ENCODE measurements at regions of chr3 and their contacts with region 1.

Region 1: DNA sequence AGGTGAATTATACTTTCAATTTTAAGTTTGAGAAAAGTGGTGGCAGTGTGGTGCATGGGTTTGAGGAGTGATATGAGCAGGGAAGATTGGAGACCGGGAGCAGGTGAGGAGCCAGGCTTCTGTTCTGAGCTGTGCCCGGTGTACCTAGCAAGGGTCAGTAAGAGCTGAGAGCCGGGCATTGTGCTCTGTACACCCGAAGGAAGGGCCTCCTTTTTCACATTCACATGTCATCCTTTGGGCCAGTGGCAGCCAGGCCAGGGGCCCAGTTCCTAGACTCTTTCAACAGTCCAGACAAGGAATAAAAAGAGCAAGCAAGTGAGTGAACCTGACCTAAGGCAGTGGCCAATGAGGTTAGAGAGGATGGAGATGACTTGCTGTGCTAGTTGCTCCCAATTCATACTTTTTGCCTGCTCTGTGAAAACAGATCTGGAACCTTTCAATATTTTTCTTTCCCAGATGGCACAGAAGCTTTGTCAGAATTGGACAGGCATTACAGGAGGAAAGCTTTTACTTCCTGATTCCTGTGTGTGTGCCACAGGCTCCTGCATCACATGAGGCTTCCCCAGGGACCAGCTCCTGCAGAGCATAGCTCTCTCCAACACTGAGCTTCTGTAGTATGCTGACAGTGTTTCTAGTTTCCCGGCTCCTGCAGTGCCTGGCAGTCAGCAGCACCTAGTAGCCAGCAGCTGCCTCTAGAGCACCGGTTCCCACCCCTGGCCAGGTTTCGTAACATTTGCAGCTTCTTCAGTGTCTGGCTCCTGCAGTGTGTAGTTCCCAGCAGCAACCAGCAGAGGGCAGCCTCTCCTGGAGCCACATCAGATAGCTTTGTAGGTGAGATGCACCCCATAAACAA is 5.3 kb upstream of the TRA2B start:
- DNase-seq: peak; percentile 91
- ATAC-seq: peak; percentile 95
- H3K4me3 Mint-ChIP-seq: no peak overlapping the region
- H3K27ac Mint-ChIP-seq: no peak overlapping the region
- H3K4me1 Mint-ChIP-seq: peaks cover 24% of the 10 kb centered on the region
- H3K27me3 Mint-ChIP-seq: peaks cover 19% of the 10 kb centered on the region

Region 2: DNA sequence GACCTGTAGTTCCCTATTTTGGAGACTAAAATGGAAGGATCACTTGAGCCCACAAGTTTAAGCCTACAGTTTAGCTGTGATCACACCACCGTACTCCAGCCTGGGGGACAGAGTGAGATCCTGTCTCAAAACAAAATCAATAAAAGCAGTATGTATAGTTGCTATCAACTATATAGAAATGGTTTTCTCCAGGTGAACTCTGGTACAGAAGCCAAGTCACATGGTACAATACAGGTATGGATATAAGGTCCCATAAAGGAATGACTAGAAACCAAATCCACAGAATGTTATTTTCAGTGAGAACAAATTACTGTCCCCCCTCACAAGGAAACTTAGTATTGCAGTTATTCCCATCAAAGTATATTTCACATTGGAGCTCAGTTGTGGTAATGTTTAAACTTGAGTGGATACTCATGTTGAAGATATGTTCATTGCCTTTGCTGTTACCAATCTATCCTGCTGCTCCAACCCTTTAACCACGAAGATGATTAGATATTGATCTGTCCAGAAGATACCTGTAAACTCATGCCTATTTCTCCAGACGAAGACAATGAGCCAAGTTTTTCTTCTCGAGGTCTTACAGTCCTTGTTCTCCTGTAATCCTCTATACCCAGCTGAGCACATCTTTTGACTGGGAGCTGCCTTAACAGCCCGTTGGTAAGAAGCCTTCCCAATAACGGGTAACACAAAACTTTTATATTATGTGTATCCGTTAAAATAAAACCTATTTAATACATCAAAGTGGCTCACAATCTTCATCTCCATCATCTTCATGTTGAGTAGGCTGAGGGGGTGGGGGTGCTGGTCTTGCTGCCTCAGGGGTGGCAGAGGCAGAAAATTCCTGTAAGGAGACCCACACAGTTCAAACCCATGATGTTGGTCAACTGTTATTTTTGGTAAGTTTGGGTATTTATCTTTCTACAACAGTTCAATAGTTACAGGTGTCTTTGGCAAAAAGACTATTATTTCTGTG is 29.9 kb before region 1 on chr3:
- CTCF ChIA-PET with region 1: interaction called, 13 read pairs
- DNase-seq: no peak
- ATAC-seq: peak; percentile 9
- H3K4me3 Mint-ChIP-seq: no peak overlapping the region
- H3K27ac Mint-ChIP-seq: no peak overlapping the region
- H3K4me1 Mint-ChIP-seq: peaks cover 2% of the 10 kb centered on the region
- H3K27me3 Mint-ChIP-seq: no peaks in the 10 kb centered on the region

Region 3: DNA sequence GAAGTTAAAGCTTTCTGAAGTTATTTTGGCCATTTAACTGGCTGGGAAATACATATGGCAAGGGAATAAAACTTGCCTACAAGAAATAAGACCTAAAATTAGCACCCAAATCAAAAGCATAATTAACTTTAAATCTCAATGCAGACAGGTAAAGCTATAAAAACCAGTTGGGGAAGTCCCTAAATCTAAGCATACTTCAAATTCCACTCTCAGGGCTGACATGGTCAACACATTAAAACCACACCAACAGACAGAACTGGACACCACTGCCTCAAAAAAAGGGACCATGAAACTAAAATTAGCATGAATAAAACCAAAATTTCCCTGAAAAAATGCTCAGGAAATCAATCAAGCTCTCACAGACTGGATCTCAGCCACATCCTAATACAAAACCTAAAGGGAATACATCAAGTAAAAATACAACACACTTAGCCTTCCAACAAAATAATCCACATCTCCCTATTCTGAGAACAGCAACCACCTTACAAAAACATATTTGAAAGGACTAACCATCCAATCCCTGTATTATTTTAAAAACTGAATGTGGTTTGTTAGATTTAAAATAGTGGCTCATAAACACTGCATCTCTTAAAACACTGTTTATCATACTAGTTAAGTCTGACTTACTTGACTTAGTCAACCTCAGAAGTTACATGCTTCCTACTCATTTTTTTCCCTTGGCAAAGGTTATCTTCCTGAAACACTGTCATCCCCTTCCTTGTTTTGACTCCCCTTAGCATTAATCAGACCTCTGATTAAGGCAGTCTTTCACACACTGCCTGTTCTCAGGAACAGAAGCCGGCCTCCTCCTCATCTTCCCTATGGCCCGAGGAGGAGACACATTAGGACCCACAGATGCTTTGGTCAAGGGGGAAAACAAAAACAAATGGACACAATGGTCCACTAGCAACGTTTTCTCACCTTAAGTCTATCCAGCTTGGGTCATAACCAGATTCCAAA is 13.7 kb before region 1 on chr3:
- CTCF ChIA-PET with region 1: interaction called, 52 read pairs
- DNase-seq: no peak
- ATAC-seq: no peak
- H3K4me3 Mint-ChIP-seq: peak overlapping the region; percentile 66
- H3K27ac Mint-ChIP-seq: peak overlapping the region; percentile 70
- H3K4me1 Mint-ChIP-seq: peaks cover 87% of the 10 kb centered on the region
- H3K27me3 Mint-ChIP-seq: no peaks in the 10 kb centered on the region

Region 4: GRCh38 chr3:185968168-185968567 is 25.0 kb after region 1 on chr3:
- CTCF ChIA-PET with region 1: interaction called, 17 read pairs
- DNase-seq: no peak
- ATAC-seq: no peak
- H3K4me3 Mint-ChIP-seq: no peak overlapping the region
- H3K27ac Mint-ChIP-seq: no peak overlapping the region
- H3K4me1 Mint-ChIP-seq: no peaks in the 10 kb centered on the region
- H3K27me3 Mint-ChIP-seq: peaks cover 11% of the 10 kb centered on the region

Region 5: GRCh38 chr3:185983495-185984141 is 40.5 kb after region 1 on chr3:
- CTCF ChIA-PET with region 1: interaction called, 38 read pairs
- DNase-seq: peak; percentile 61
- ATAC-seq: peak; percentile 78
- H3K4me3 Mint-ChIP-seq: no peak overlapping the region
- H3K27ac Mint-ChIP-seq: no peak overlapping the region
- H3K4me1 Mint-ChIP-seq: peaks cover 3% of the 10 kb centered on the region
- H3K27me3 Mint-ChIP-seq: peaks cover 34% of the 10 kb centered on the region

Region 6: GRCh38 chr3:186570096-186570940 is 627.2 kb after region 1 on chr3 and contains the start of gene DNAJB11:
- CTCF ChIA-PET with region 1: interaction called, 10 read pairs
- DNase-seq: peak; percentile 100
- ATAC-seq: peak; percentile 87
- H3K4me3 Mint-ChIP-seq: peak within 1 kb of the TSS; percentile 87
- H3K27ac Mint-ChIP-seq: peak within 1 kb of the TSS; percentile 88
- H3K4me1 Mint-ChIP-seq: peaks cover 55% of the 10 kb centered on the region
- H3K27me3 Mint-ChIP-seq: no peaks in the 10 kb centered on the region
- total RNA-seq, gene DNAJB11: 48.6 to 61.3 TPM

Measured in activated CD8-positive, alpha-beta memory T cell treated with anti-CD3 and anti-CD28 coated beads, Interleukin-2, amount 10 ng/mL, durations not matched to agents 7 days and 5 days (primary cell).